Naive thymus-derived CD4-positive, alpha-beta T cell (primary cell): ENCODE measurements at regions of chr4 and their contacts with region 1.

Region 1: GRCh38 chr4:122218762-122219161 is 66.6 kb downstream of the BLTP1 start:
- DNase-seq: peak in 1 of 9 donors; percentile 4
- ATAC-seq: no peak
- H3K4me3 ChIP-seq: no peak overlapping the region
- H3K4me3 Mint-ChIP-seq: no peak overlapping the region
- H3K27ac ChIP-seq: no peak overlapping the region
- H3K27ac Mint-ChIP-seq: no peak overlapping the region
- H3K4me1 ChIP-seq: no peaks in the 10 kb centered on the region
- H3K4me1 Mint-ChIP-seq: peaks cover 0 to 46% (median 23%) of the 10 kb centered on the region in 7 donors
- H3K27me3 ChIP-seq: no peaks in the 10 kb centered on the region
- H3K27me3 Mint-ChIP-seq: no peaks in the 10 kb centered on the region

Region 2: GRCh38 chr4:122205690-122206089 is 13.1 kb before region 1 on chr4:
- CTCF ChIA-PET with region 1: no interaction called
- POLR2A ChIA-PET with region 1: no interaction called
- intact Hi-C with region 1: loop called in 1 of 2 experiments (anchors 2 kb)
- DNase-seq: no peak
- ATAC-seq: no peak
- H3K4me3 ChIP-seq: no peak overlapping the region
- H3K4me3 Mint-ChIP-seq: no peak overlapping the region
- H3K27ac ChIP-seq: no peak overlapping the region
- H3K27ac Mint-ChIP-seq: peak overlapping the region in 1 of 9 donors; percentile 41
- H3K4me1 ChIP-seq: no peaks in the 10 kb centered on the region
- H3K4me1 Mint-ChIP-seq: peaks cover 0 to 5% (median under 1%) of the 10 kb centered on the region in 7 donors
- H3K27me3 ChIP-seq: no peaks in the 10 kb centered on the region
- H3K27me3 Mint-ChIP-seq: no peaks in the 10 kb centered on the region

Region 3: GRCh38 chr4:122244764-122245163 is 26.0 kb after region 1 on chr4:
- CTCF ChIA-PET with region 1: no interaction called
- POLR2A ChIA-PET with region 1: no interaction called
- intact Hi-C with region 1: no loop called
- DNase-seq: no peak
- ATAC-seq: no peak
- H3K4me3 ChIP-seq: no peak overlapping the region
- H3K4me3 Mint-ChIP-seq: no peak overlapping the region
- H3K27ac ChIP-seq: no peak overlapping the region
- H3K27ac Mint-ChIP-seq: no peak overlapping the region
- H3K4me1 ChIP-seq: no peaks in the 10 kb centered on the region
- H3K4me1 Mint-ChIP-seq: peaks cover 0 to 10% (median 0%) of the 10 kb centered on the region in 7 donors
- H3K27me3 ChIP-seq: no peaks in the 10 kb centered on the region
- H3K27me3 Mint-ChIP-seq: no peaks in the 10 kb centered on the region